Dendritic cell treated with granulocyte-macrophage colony-stimulating factor and Interleukin-4, amounts not matched to agents 40 ng/mL and 50 ng/mL, for 4 days (primary cell): ENCODE measurements at regions of chr9 and their contacts with region 1.

Region 1: GRCh38 chr9:70340572-70340971 is 73.9 kb downstream of the KLF9 start:
- H3K4me3 Mint-ChIP-seq: no peak overlapping the region
- H3K27ac Mint-ChIP-seq: no peak overlapping the region
- H3K4me1 Mint-ChIP-seq: no peaks in the 10 kb centered on the region
- H3K27me3 Mint-ChIP-seq: no peaks in the 10 kb centered on the region

Region 2: GRCh38 chr9:70315389-70315788 is 25.2 kb before region 1 on chr9:
- intact Hi-C with region 1: loop called (anchors 2 kb)
- H3K4me3 Mint-ChIP-seq: no peak overlapping the region
- H3K27ac Mint-ChIP-seq: no peak overlapping the region
- H3K4me1 Mint-ChIP-seq: no peaks in the 10 kb centered on the region
- H3K27me3 Mint-ChIP-seq: no peaks in the 10 kb centered on the region

Region 3: GRCh38 chr9:70398145-70398556 is 57.6 kb after region 1 on chr9:
- intact Hi-C with region 1: loop called (anchors 10 kb)
- H3K4me3 Mint-ChIP-seq: peak overlapping the region; percentile 26
- H3K27ac Mint-ChIP-seq: peak overlapping the region; percentile 67
- H3K4me1 Mint-ChIP-seq: peaks cover 49% of the 10 kb centered on the region
- H3K27me3 Mint-ChIP-seq: no peaks in the 10 kb centered on the region

Region 4: DNA sequence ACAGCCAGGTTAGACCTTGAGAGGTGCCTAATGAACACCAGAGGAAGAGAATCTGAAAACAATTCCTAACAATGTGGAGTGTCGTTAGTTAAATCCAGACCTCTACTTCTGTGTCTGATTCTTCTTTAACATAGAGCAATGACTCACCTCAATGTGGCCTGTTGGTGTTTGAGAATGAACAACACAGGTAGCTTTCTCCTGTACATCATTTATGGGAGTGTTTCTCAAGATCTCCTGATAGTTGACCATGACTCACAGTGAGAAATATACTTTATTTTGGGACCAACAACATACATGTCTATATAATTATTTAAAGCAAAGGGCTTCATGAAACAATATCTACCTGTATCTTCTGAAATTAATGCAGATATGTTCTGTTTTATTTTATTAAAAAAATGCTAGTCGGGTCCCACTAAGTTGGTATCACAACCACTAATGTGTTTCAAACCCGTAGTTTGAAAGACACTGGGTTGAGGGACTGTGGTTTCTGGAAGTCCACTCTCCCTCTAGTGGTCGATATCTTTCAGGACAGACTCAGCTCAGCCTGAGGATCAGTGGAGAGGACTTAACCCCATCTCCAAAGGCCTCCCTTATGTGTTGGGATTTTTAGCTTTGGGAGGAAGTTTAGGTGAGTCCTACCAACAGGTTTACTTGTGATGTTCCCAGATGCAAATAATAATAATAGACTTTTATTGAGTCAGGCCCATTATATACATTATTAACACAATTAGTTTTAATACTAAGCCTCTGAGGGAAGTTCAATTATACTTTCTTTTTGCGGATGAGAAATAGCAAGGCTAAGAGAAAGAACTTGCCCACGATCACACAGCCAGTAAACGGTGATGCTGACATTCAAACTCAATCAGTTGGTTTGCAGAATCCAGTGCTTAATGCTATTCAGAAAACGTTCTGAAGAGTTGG is 143.9 kb after region 1 on chr9:
- intact Hi-C with region 1: loop called (anchors 5 kb)
- H3K4me3 Mint-ChIP-seq: no peak overlapping the region
- H3K27ac Mint-ChIP-seq: no peak overlapping the region
- H3K4me1 Mint-ChIP-seq: peaks cover 33% of the 10 kb centered on the region
- H3K27me3 Mint-ChIP-seq: no peaks in the 10 kb centered on the region

Region 5: GRCh38 chr9:70602321-70603019 is 261.9 kb after region 1 on chr9:
- intact Hi-C with region 1: loop called (anchors 2 kb)
- H3K4me3 Mint-ChIP-seq: no peak overlapping the region
- H3K27ac Mint-ChIP-seq: no peak overlapping the region
- H3K4me1 Mint-ChIP-seq: peaks cover 21% of the 10 kb centered on the region
- H3K27me3 Mint-ChIP-seq: no peaks in the 10 kb centered on the region